ENCODE measurements at regions of chr1 and their contacts with region 1.

Region 1: DNA sequence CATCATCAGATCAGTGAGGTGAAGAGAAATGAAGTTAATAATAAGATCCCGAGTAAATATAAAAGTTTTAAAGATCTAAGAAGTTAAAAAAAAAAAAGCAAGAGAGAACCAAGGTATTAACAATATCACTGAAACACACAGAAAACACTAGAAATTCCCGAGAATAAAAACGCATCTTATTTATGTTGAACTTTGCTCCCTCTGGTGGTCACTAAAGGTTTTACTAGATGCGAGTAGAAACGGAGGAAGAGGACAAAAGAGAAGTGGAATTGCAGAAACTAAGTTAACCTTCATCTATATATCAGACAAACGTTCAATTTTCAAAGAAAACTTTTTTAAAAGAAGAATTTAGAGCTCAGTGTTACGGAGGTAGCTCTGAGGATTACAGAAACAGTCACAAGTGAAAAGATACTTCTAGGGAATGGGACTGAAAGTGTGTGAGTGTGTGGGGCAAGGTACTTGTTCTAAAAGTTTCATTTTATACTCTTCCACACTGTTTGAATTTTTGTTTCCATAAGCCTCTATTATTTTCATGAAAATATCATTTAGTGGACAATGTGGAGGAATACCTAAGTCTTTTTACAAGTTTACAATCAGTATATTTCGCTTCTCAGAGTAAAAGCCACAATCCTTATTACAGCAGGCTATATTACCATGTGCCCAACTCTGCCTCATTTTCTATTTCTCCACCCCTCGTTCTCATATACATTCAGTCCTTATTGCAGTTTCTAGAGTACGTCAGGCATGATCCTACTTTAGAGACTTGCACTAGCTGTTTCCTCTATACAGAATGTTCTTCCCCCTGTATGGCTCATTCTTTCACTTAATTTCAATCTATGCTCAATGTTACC is 19.7 kb downstream of the ACBD6 start:
- DNase-seq: no peak
- H3K4me3 Mint-ChIP-seq: no peak overlapping the region
- H3K27ac Mint-ChIP-seq: no peak overlapping the region
- H3K4me1 Mint-ChIP-seq: peaks cover 11% of the 10 kb centered on the region
- H3K27me3 Mint-ChIP-seq: no peaks in the 10 kb centered on the region

Region 2: DNA sequence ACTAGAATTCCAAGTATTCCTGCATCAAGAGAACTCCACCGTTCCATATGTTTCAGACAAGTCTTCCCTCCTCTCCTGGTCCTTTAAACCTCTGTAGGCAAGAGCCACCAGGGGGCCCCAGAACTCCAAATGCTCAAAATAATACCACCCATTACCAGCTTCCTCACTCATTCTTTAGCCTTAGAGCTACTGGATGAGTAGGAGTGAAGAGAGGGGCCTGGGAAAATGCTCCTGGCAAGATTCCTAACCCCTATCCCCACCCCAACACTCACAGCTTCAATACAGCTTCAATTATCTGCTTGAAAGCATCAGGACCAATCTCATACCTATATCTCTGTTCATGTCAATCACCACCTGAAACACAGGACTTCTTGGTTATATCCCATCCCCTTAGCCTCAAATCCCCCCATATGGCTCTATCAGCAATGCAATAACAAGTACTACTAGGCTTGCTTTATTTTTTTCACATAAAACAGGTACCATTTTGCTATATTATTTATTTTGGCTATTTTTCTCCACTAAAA is 614.8 kb before region 1 on chr1:
- CTCF ChIA-PET with region 1: interaction called, 6 read pairs
- intact Hi-C with region 1: loop called (anchors 5 kb)
- DNase-seq: peak; percentile 71
- H3K4me3 Mint-ChIP-seq: no peak overlapping the region
- H3K27ac Mint-ChIP-seq: no peak overlapping the region
- H3K4me1 Mint-ChIP-seq: peaks cover 13% of the 10 kb centered on the region
- H3K27me3 Mint-ChIP-seq: no peaks in the 10 kb centered on the region

Region 3: DNA sequence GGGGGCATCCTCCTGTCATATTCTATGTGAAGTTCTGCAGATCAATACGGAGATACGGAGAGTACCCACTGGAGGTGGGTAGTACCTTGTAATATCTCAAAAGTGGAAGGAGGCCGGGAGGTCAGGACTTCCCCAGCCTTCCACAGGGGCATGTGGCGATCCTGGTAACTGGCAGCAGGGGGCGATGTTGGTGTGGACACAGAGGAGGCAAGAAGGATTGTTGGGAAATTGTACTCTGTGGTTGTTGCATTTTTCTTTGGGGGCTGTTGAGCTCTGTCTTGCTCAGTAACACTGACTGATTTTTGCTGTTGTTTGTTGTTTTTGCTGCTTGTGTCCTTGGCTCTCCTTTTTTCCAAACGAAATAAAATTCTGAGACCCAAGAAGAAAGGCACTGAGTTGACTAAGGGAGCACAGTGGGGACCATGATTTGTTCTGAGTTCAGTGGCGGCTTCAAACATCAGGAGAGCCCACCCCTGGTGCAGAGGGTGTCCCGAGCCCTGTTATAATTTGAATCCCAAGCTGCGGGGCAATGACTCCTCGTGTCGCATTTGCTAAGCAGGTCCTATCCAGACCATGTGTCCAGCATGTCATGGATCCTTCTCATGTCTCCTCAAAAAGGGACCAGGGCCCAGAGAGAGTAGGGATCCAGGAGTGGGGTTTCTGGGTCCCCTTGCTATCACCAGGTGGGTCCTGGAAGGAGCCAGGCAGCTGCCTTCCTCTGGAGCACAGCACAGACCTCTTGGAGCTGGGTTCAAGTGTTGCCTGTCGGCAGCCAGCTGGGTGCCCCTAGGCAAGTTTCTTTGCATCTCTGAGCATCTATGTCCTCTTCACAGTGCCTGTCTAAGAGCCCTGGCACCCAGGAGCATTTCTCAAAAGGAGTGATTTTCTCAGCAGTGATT is 229.8 kb before region 1 on chr1:
- CTCF ChIA-PET with region 1: interaction called, 39 read pairs
- intact Hi-C with region 1: loop called (anchors 1 kb)
- DNase-seq: peak; percentile 89
- H3K4me3 Mint-ChIP-seq: no peak overlapping the region
- H3K27ac Mint-ChIP-seq: no peak overlapping the region
- H3K4me1 Mint-ChIP-seq: no peaks in the 10 kb centered on the region
- H3K27me3 Mint-ChIP-seq: peaks cover 36% of the 10 kb centered on the region

Region 4: DNA sequence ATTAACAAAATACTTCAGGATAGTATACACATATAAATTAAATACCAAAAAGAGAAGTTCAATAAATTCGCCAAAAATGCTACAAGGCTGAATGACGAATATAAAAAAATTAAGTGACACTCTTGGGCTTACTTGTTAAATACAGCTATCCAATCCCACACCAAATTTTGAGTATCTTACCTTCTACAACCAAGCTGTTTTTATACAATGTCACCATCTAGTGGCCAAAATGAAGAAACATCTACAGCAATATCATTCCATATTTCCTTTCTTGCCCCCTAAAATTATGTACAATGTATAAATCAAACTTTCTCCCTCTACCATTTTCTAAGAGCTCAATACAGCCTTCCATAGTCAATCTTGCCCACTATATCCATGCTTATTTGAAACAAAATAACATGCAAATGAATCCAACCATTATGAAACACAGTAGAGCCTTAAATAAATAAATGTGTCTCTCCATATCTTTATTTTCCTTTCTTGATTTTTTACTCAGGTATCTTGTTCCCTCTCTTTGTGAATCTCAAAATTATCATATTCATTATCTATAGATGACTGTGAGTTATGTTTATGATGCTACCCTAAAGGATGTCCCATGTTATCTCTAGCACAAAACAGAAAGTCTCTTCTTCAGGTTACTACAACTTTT is 66.5 kb before region 1 on chr1:
- CTCF ChIA-PET with region 1: no interaction called
- intact Hi-C with region 1: loop called (anchors 5 kb)
- DNase-seq: no peak
- H3K4me3 Mint-ChIP-seq: no peak overlapping the region
- H3K27ac Mint-ChIP-seq: no peak overlapping the region
- H3K4me1 Mint-ChIP-seq: no peaks in the 10 kb centered on the region
- H3K27me3 Mint-ChIP-seq: no peaks in the 10 kb centered on the region